ENCODE measurements at regions of chr11 and their contacts with region 1.

Region 1: DNA sequence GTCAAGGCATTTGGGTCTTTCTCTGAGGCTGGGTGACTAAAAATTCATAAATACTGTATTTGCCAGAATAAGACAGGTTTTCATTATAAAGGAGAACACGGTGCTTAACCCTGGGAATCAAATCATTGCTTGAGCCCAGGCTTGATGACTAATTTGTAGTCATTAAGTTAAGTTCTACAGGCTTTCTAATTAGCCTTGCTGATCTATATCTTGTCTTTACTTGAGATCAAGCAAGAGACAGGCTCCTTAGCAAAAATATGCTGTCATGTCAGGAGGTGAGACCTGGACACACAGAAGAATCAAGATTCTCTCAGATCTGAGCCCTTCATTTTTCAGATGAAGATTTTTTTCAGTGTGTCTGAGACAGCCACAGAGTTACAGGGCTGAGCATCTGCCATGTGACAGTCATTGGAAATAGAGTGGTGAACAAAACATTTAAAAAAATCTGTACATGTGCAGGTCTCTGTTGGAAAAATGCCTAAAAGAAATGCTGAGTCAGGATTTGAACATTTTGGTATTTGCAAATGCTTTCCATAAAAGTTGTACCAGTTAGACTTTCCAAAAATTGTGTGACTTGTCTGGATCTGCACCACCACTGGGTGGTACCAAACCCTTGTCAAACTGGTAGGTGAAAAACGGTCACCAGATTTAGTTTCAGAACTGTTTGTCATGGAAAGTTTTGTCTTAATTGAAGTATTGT is 14.6 kb downstream of the ACAT1 start:
- DNase-seq: peak; percentile 68
- H3K4me3 Mint-ChIP-seq: no peak overlapping the region
- H3K27ac Mint-ChIP-seq: peak overlapping the region; percentile 74
- H3K4me1 Mint-ChIP-seq: peaks cover 25% of the 10 kb centered on the region
- H3K27me3 Mint-ChIP-seq: no peaks in the 10 kb centered on the region

Region 2: GRCh38 chr11:108199446-108200321 is 63.7 kb after region 1 on chr11:
- CTCF ChIA-PET with region 1: no interaction called
- intact Hi-C with region 1: loop called (anchors 5 kb)
- DNase-seq: peak; percentile 94
- H3K4me3 Mint-ChIP-seq: no peak overlapping the region
- H3K27ac Mint-ChIP-seq: peak overlapping the region; percentile 48
- H3K4me1 Mint-ChIP-seq: peaks cover 86% of the 10 kb centered on the region
- H3K27me3 Mint-ChIP-seq: no peaks in the 10 kb centered on the region

Region 3: GRCh38 chr11:108302121-108302785 is 166.3 kb after region 1 on chr11:
- CTCF ChIA-PET with region 1: no interaction called
- intact Hi-C with region 1: loop called (anchors 2 kb)
- DNase-seq: no peak
- H3K4me3 Mint-ChIP-seq: no peak overlapping the region
- H3K27ac Mint-ChIP-seq: peak overlapping the region; percentile 50
- H3K4me1 Mint-ChIP-seq: peaks cover 36% of the 10 kb centered on the region
- H3K27me3 Mint-ChIP-seq: no peaks in the 10 kb centered on the region

Region 4: GRCh38 chr11:108414958-108415357 is 279.0 kb after region 1 on chr11:
- CTCF ChIA-PET with region 1: no interaction called
- intact Hi-C with region 1: loop called (anchors 5 kb)
- DNase-seq: no peak
- H3K4me3 Mint-ChIP-seq: no peak overlapping the region
- H3K27ac Mint-ChIP-seq: no peak overlapping the region
- H3K4me1 Mint-ChIP-seq: no peaks in the 10 kb centered on the region
- H3K27me3 Mint-ChIP-seq: no peaks in the 10 kb centered on the region

Region 5: GRCh38 chr11:108497317-108498045 is 361.5 kb after region 1 on chr11:
- CTCF ChIA-PET with region 1: no interaction called
- intact Hi-C with region 1: loop called (anchors 1 kb)
- DNase-seq: peak; percentile 84
- H3K4me3 Mint-ChIP-seq: peak overlapping the region; percentile 85
- H3K27ac Mint-ChIP-seq: peak overlapping the region; percentile 92
- H3K4me1 Mint-ChIP-seq: peaks cover 16% of the 10 kb centered on the region
- H3K27me3 Mint-ChIP-seq: no peaks in the 10 kb centered on the region

Region 6: GRCh38 chr11:108620958-108621772 is 485.2 kb after region 1 on chr11:
- CTCF ChIA-PET with region 1: no interaction called
- intact Hi-C with region 1: loop called (anchors 1 kb)
- DNase-seq: no peak
- H3K4me3 Mint-ChIP-seq: no peak overlapping the region
- H3K27ac Mint-ChIP-seq: no peak overlapping the region
- H3K4me1 Mint-ChIP-seq: peaks cover 24% of the 10 kb centered on the region
- H3K27me3 Mint-ChIP-seq: peaks cover 10% of the 10 kb centered on the region

Region 7: GRCh38 chr11:108871152-108871551 is 735.2 kb after region 1 on chr11:
- CTCF ChIA-PET with region 1: no interaction called
- intact Hi-C with region 1: loop called (anchors 5 kb)
- DNase-seq: peak; percentile 67
- H3K4me3 Mint-ChIP-seq: no peak overlapping the region
- H3K27ac Mint-ChIP-seq: no peak overlapping the region
- H3K4me1 Mint-ChIP-seq: peaks cover 29% of the 10 kb centered on the region
- H3K27me3 Mint-ChIP-seq: no peaks in the 10 kb centered on the region

Measured in activated naive CD4-positive, alpha-beta T cell treated with anti-CD3 and anti-CD28 coated beads for 36 hours (primary cell).